ENCODE measurements at regions of chr6 and their contacts with region 1.

Region 1: DNA sequence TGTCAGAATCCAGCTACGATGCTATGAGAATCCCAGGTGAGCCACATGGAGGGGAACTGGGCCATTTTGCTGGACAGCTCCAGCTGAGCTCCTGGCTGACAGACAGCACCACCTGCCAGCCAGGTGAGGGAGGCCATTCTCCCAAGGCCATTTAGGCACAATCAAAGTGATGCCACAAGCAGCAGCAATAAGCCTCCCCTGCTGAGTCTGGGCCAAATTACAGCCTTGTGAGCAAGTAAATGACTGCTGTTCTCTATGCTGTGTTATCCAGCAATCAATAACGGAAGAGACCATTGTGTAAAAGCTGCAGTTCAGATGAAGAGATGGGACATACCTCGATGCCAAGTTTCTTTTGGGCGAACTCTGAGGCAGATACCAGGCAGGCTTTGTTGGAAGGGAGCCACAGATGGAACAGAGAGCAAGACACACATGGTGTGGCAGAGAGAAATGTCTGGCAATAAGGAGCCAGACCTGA is 14.0 kb upstream of the SCGN start:
- DNase-seq: peak; percentile 21
- H3K4me3 ChIP-seq: no peak overlapping the region
- H3K27ac ChIP-seq: no peak overlapping the region
- H3K4me1 ChIP-seq: no peaks in the 10 kb centered on the region
- H3K27me3 ChIP-seq: peaks cover 14% of the 10 kb centered on the region
- CTCF ChIP-seq: peak; percentile 26 to 56

Region 2: GRCh38 chr6:25652007-25652515 is 14.1 kb after region 1 on chr6 and contains the start of gene SCGN:
- CTCF ChIA-PET with region 1: no interaction called
- dilution Hi-C with region 1: no loop called
- in situ Hi-C with region 1: no loop called
- intact Hi-C with region 1: loop called (anchors 2 kb)
- DNase-seq: peak; percentile 67
- H3K4me3 ChIP-seq: peak within 1 kb of the TSS in 2 of 3 experiments; percentile 12 to 28
- H3K27ac ChIP-seq: no peak within 1 kb of the TSS
- H3K4me1 ChIP-seq: no peaks in the 10 kb centered on the region
- H3K27me3 ChIP-seq: peaks cover 5% of the 10 kb centered on the region
- CTCF ChIP-seq: no peak
- total RNA-seq, gene SCGN: not detected

Measured in mammary epithelial cell (primary cell).